Astrocyte of the cerebellum (primary cell): ENCODE measurements at regions of chr3 and their contacts with region 1.

Region 1: GRCh38 chr3:148962513-148962912 is 28.8 kb upstream of the GYG1 start:
- DNase-seq: peak; percentile 43
- H3K4me3 ChIP-seq: no peak overlapping the region
- CTCF ChIP-seq: no peak

Region 2: GRCh38 chr3:149031096-149031495 is 68.6 kb after region 1 on chr3:
- in situ Hi-C with region 1: loop called (anchors 5 kb)
- DNase-seq: no peak
- H3K4me3 ChIP-seq: no peak overlapping the region
- CTCF ChIP-seq: no peak

Region 3: DNA sequence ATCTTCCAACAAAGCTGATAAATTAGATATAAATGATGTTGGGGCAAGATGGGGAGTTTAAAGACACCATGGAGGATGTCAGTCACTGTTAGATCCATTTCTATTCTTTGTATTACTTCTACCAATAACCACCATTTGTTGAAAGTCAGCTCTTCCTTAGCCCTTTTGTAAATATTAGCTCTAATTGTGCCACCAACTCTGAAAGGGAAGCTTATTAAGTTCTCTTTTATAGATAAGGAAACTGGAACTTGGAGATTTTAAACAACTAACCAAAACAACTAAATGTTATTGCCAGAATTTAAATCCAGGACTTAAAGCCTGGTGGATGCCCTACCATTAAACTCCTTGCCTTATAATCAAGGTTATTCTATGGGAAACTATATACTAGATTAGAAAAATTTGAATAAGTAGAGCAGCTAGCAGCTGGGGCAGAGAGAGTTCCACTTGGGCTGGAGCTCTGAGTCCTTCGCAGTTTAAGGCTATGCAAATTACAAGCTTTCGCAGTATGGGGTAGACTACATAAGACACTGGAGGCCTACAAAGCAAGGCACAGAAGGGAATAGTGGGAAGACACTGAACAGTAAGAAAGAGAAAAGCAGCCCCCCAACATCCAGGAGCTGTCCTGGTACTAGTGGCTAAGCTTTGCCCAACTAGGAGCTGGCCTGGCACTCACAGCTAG is 318.3 kb after region 1 on chr3:
- in situ Hi-C with region 1: loop called (anchors 5 kb)
- DNase-seq: no peak
- H3K4me3 ChIP-seq: no peak overlapping the region
- CTCF ChIP-seq: no peak

Region 4: GRCh38 chr3:149466192-149466591 is 503.7 kb after region 1 on chr3:
- in situ Hi-C with region 1: no loop called
- DNase-seq: peak; percentile 64
- H3K4me3 ChIP-seq: no peak overlapping the region
- CTCF ChIP-seq: no peak